B cell (primary cell): ENCODE measurements at regions of chr20 and their contacts with region 1.

Region 1: GRCh38 chr20:59184880-59185447 is 21.3 kb downstream of the ZNF831 start:
- DNase-seq: no peak
- ATAC-seq: no peak
- H3K4me3 ChIP-seq: no peak overlapping the region
- H3K4me3 Mint-ChIP-seq: no peak overlapping the region
- H3K27ac ChIP-seq: no peak overlapping the region
- H3K27ac Mint-ChIP-seq: no peak overlapping the region
- H3K4me1 ChIP-seq: peaks cover 15 to 18% of the 10 kb centered on the region in 2 donors
- H3K4me1 Mint-ChIP-seq: peaks cover 32% of the 10 kb centered on the region
- H3K27me3 ChIP-seq: no peaks in the 10 kb centered on the region
- H3K27me3 Mint-ChIP-seq: no peaks in the 10 kb centered on the region
- CTCF ChIP-seq: no peak

Region 2: GRCh38 chr20:59149651-59150504 is 35.1 kb before region 1 on chr20:
- CTCF ChIA-PET with region 1: no interaction called
- POLR2A ChIA-PET with region 1: no interaction called
- intact Hi-C with region 1: loop called (anchors 5 kb)
- DNase-seq: peak; percentile 85
- ATAC-seq: peak; percentile 75
- H3K4me3 ChIP-seq: peak overlapping the region in 1 of 5 experiments; percentile 28
- H3K4me3 Mint-ChIP-seq: peak overlapping the region; percentile 66
- H3K27ac ChIP-seq: peak overlapping the region; percentile 67 to 86
- H3K27ac Mint-ChIP-seq: peak overlapping the region; percentile 80
- H3K4me1 ChIP-seq: peaks cover 50 to 56% of the 10 kb centered on the region in 2 donors
- H3K4me1 Mint-ChIP-seq: peaks cover 70% of the 10 kb centered on the region
- H3K27me3 ChIP-seq: no peaks in the 10 kb centered on the region
- H3K27me3 Mint-ChIP-seq: no peaks in the 10 kb centered on the region
- CTCF ChIP-seq: no peak

Region 3: GRCh38 chr20:59214606-59215547 is 29.9 kb after region 1 on chr20:
- CTCF ChIA-PET with region 1: no interaction called
- POLR2A ChIA-PET with region 1: no interaction called
- intact Hi-C with region 1: no loop called
- DNase-seq: no peak
- ATAC-seq: no peak
- H3K4me3 ChIP-seq: no peak overlapping the region
- H3K4me3 Mint-ChIP-seq: no peak overlapping the region
- H3K27ac ChIP-seq: no peak overlapping the region
- H3K27ac Mint-ChIP-seq: no peak overlapping the region
- H3K4me1 ChIP-seq: no peaks in the 10 kb centered on the region
- H3K4me1 Mint-ChIP-seq: no peaks in the 10 kb centered on the region
- H3K27me3 ChIP-seq: no peaks in the 10 kb centered on the region
- H3K27me3 Mint-ChIP-seq: no peaks in the 10 kb centered on the region
- CTCF ChIP-seq: no peak

Region 4: GRCh38 chr20:59525500-59526241 is 340.7 kb after region 1 on chr20:
- CTCF ChIA-PET with region 1: no interaction called
- POLR2A ChIA-PET with region 1: no interaction called
- intact Hi-C with region 1: no loop called
- DNase-seq: no peak
- ATAC-seq: no peak
- H3K4me3 ChIP-seq: no peak overlapping the region
- H3K4me3 Mint-ChIP-seq: no peak overlapping the region
- H3K27ac ChIP-seq: no peak overlapping the region
- H3K27ac Mint-ChIP-seq: no peak overlapping the region
- H3K4me1 ChIP-seq: peaks cover 0 to 3% of the 10 kb centered on the region in 2 donors
- H3K4me1 Mint-ChIP-seq: no peaks in the 10 kb centered on the region
- H3K27me3 ChIP-seq: peaks cover 0 to 27% (median 6%) of the 10 kb centered on the region in 4 experiments
- H3K27me3 Mint-ChIP-seq: peaks cover 38% of the 10 kb centered on the region
- CTCF ChIP-seq: peak; percentile 78